Activated naive CD4-positive, alpha-beta T cell treated with anti-CD3 and anti-CD28 coated beads, Interleukin-2, amount 10 ng/mL, durations not matched to agents 7 days and 5 days (primary cell): ENCODE measurements at regions of chr11 and their contacts with region 1.

Region 1: DNA sequence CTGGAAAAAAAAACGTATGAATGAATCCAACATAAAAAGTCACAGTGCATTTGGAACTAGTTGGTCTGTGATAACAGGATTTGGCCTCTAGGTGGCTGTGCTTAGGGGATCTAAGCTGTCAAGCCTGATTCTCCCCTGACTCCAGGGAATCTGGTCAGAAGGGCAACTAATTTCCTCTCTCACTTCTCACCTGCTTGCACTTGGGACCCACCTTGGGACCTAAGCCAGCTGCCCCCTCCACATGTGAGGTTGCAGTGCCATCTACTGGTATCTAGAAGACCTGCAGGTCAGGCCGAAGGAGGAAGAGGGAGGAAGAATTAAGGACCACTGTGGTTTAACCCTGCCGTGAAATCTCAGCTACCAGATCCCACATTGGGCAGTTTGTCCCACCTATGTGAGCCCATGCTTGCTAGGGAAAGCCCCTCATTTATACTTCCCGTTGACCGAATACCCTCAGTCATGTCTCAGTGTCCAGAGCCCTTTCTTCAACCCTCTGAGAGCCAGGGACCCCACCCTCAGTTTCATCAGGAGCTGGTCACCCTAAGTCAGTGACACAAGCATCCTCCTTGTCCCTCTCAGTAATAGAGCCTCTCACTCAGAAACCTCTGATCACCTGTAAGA is 33.2 kb upstream of the CAVIN3 start:
- DNase-seq: peak; percentile 64
- H3K4me3 Mint-ChIP-seq: no peak overlapping the region
- H3K27ac Mint-ChIP-seq: no peak overlapping the region
- H3K4me1 Mint-ChIP-seq: peaks cover 2% of the 10 kb centered on the region
- H3K27me3 Mint-ChIP-seq: peaks cover 11% of the 10 kb centered on the region

Region 2: GRCh38 chr11:6251120-6251733 is 102.2 kb before region 1 on chr11:
- CTCF ChIA-PET with region 1: interaction called, 83 read pairs
- DNase-seq: peak; percentile 67
- H3K4me3 Mint-ChIP-seq: no peak overlapping the region
- H3K27ac Mint-ChIP-seq: no peak overlapping the region
- H3K4me1 Mint-ChIP-seq: no peaks in the 10 kb centered on the region
- H3K27me3 Mint-ChIP-seq: peaks cover 23% of the 10 kb centered on the region

Region 3: DNA sequence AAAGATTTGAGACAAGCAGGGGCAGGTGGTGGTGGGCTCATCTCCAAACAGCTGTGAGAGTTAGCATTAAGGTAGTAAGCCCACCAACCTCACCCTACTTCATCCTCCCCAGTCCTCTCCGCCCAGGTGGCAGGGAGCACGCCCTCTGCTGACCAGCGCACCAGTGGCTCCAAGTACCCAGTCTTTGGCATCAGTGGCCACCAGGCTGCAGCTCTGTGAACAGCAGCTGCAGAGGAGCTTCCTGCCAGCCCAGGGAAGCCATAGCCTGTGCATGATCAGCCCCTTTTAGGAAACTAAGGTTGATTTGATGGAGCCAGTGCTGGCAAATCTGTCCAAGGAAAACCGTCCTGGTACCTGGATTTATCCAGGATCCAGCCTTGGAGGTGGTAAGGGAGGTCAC is 54.9 kb before region 1 on chr11:
- CTCF ChIA-PET with region 1: interaction called, 21 read pairs
- DNase-seq: no peak
- H3K4me3 Mint-ChIP-seq: no peak overlapping the region
- H3K27ac Mint-ChIP-seq: no peak overlapping the region
- H3K4me1 Mint-ChIP-seq: no peaks in the 10 kb centered on the region
- H3K27me3 Mint-ChIP-seq: peaks cover 21% of the 10 kb centered on the region

Region 4: GRCh38 chr11:6321961-6322362 is 31.5 kb before region 1 on chr11:
- CTCF ChIA-PET with region 1: interaction called, 65 read pairs
- DNase-seq: no peak
- H3K4me3 Mint-ChIP-seq: no peak overlapping the region
- H3K27ac Mint-ChIP-seq: peak overlapping the region; percentile 47
- H3K4me1 Mint-ChIP-seq: peaks cover 30% of the 10 kb centered on the region
- H3K27me3 Mint-ChIP-seq: peaks cover 49% of the 10 kb centered on the region